IMR-90 (cell line): ENCODE measurements at regions of chr12 and their contacts with region 1.

Region 1: GRCh38 chr12:53451661-53452158 is at the start of gene PCBP2:
- DNase-seq: peak; percentile 100
- ATAC-seq: peak; percentile 91
- H3K4me3 ChIP-seq: peak within 1 kb of the TSS; percentile 98
- H3K27ac ChIP-seq: peak within 1 kb of the TSS; percentile 92
- H3K4me1 ChIP-seq: peaks cover 5% of the 10 kb centered on the region
- H3K27me3 ChIP-seq: no peaks in the 10 kb centered on the region
- CTCF ChIP-seq: peak; percentile 95
- POLR2A ChIP-seq: peak; percentile 93
- RAD21 ChIP-seq: peak; percentile 42
- total RNA-seq, gene PCBP2: 190 and 198 TPM in 2 replicates

Region 2: GRCh38 chr12:52969828-52970569 is 481.7 kb before region 1 on chr12:
- CTCF ChIA-PET with region 1: no interaction called
- POLR2A ChIA-PET with region 1: no interaction called
- dilution Hi-C with region 1: no loop called
- in situ Hi-C with region 1: no loop called
- intact Hi-C with region 1: no loop called
- DNase-seq: no peak
- ATAC-seq: no peak
- H3K4me3 ChIP-seq: no peak overlapping the region
- H3K27ac ChIP-seq: no peak overlapping the region
- H3K4me1 ChIP-seq: peaks cover 10% of the 10 kb centered on the region
- H3K27me3 ChIP-seq: no peaks in the 10 kb centered on the region; the same call in 1 of the 2 replicates
- CTCF ChIP-seq: no peak
- POLR2A ChIP-seq: no peak
- RAD21 ChIP-seq: no peak

Region 3: DNA sequence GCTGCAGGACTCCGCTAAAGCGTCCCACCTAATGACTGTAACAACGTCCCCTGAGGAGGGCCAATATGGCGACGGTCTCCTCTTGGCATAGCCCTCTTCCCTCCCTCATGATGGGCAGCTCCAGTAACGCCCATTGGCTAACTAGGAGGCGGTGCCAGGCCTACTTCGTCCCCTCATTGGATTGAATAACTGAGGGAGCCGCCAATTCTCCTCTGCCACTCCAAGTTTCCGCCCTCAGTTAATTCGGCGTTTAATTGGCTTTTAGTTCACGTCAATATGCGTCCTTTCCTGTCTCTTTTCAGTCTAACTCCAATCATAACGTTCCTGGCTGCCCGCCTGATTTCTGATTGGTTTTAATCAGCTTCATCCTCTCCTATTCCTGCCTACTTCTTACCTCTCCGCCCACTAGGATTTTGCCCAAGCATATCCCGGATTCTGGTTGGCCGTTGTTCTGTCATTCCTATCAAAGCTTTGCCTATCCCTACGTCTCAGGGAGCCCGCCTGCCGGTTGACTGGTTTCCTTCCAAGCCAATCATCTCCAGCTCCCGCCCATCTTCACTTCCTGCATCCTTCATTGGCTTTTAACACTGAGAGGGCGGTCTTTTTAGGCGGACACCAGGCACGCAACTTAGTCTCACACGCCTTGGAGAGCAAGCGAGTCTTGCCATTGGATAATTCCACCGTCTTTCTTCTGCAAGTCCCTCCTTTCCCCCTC is 72.2 kb before region 1 on chr12:
- CTCF ChIA-PET with region 1: no interaction called
- POLR2A ChIA-PET with region 1: no interaction called
- dilution Hi-C with region 1: no loop called
- in situ Hi-C with region 1: no loop called
- intact Hi-C with region 1: loop called (anchors 2 kb)
- DNase-seq: peak; percentile 100
- ATAC-seq: peak; percentile 72
- H3K4me3 ChIP-seq: peak overlapping the region; percentile 44
- H3K27ac ChIP-seq: peak overlapping the region; percentile 96
- H3K4me1 ChIP-seq: peaks cover 16% of the 10 kb centered on the region
- H3K27me3 ChIP-seq: no peaks in the 10 kb centered on the region
- CTCF ChIP-seq: no peak
- POLR2A ChIP-seq: peak; percentile 83
- RAD21 ChIP-seq: no peak

Region 4: GRCh38 chr12:53431187-53431586 is 20.5 kb before region 1 on chr12:
- CTCF ChIA-PET with region 1: no interaction called
- POLR2A ChIA-PET with region 1: no interaction called
- dilution Hi-C with region 1: no loop called
- in situ Hi-C with region 1: no loop called
- intact Hi-C with region 1: no loop called
- DNase-seq: peak; percentile 49
- ATAC-seq: peak; percentile 22
- H3K4me3 ChIP-seq: no peak overlapping the region
- H3K27ac ChIP-seq: no peak overlapping the region
- H3K4me1 ChIP-seq: peaks cover 5% of the 10 kb centered on the region; the same call in 1 of the 2 replicates
- H3K27me3 ChIP-seq: no peaks in the 10 kb centered on the region
- CTCF ChIP-seq: no peak
- POLR2A ChIP-seq: no peak
- RAD21 ChIP-seq: no peak

Region 5: DNA sequence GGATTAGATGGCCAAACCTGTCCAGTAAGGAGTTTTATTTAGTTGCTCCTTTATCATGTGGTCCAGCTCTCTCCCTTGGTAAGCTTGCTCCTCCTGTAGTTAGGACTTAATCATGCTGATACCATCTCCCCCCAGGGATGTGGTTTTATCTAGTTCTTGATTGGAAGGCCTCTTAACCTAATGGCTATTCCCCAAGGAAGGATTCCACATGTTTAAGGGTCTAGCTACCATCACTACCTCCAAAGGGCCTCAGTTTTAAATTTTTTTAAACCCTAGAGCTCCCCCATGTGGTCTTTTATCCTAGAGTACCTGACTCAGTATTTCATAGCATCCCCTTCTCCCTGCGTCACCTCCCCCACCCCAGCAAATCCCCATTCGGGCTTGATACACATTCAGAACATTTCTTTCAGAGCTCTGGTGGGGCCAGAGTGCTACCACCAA is 25.1 kb after region 1 on chr12:
- CTCF ChIA-PET with region 1: no interaction called
- POLR2A ChIA-PET with region 1: interaction called, 13 read pairs
- dilution Hi-C with region 1: no loop called
- in situ Hi-C with region 1: no loop called
- intact Hi-C with region 1: no loop called
- DNase-seq: no peak
- ATAC-seq: no peak
- H3K4me3 ChIP-seq: no peak overlapping the region
- H3K27ac ChIP-seq: no peak overlapping the region
- H3K4me1 ChIP-seq: peaks cover 19% of the 10 kb centered on the region
- H3K27me3 ChIP-seq: no peaks in the 10 kb centered on the region
- CTCF ChIP-seq: peak; percentile 34
- POLR2A ChIP-seq: no peak
- RAD21 ChIP-seq: no peak

Region 6: DNA sequence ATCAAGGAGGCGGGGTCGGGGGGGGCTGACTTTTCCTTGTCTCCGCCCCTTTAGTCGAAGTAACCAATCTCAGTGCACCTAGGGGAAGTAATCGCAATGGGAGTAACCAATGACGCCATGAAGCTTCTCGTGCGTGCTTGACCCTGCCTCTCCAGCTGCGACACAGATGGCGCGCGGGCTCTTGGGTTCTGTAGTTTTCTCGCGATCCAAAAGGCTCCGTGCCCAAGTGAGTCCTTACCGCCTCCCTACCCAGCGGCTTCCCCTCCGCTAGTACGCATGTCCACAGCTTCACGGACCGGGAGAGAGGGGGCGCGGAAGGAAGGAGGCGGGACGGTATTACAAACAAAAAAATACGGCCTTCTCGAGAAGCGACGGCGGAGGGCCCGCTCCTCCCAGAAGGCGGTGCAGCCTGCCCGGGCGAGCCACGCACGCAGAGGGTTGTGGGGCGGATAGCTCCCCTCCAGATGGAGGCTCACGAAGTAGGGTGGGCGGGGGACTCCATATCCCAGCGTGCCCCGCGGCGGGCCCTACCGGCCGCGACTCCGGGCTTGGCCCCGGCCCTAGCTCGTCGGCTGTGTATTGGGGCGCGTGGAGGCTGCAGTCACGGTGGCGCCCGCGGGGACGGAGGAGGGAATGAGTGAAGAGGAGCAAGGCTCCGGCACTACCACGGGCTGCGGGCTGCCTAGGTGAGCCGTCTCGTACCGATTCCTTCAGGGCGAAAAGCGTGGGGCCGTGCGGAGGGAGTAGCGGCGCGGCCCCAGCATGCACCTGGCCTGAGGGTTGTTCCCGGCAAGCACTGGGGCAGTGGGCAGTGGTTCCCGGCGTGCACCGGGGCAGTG is 49.3 kb after region 1 on chr12 and contains the start of gene TARBP2:
- CTCF ChIA-PET with region 1: no interaction called
- POLR2A ChIA-PET with region 1: no interaction called
- dilution Hi-C with region 1: no loop called
- in situ Hi-C with region 1: no loop called
- intact Hi-C with region 1: loop called (anchors 5 kb)
- DNase-seq: peak; percentile 100
- ATAC-seq: peak; percentile 71
- H3K4me3 ChIP-seq: peak within 1 kb of the TSS; percentile 76
- H3K27ac ChIP-seq: peak within 1 kb of the TSS; percentile 96
- H3K4me1 ChIP-seq: peaks cover 14% of the 10 kb centered on the region
- H3K27me3 ChIP-seq: no peaks in the 10 kb centered on the region
- CTCF ChIP-seq: 0 out of 2 replicates have a peak, but pooled peaks have one; percentile 9
- POLR2A ChIP-seq: peak; percentile 76
- RAD21 ChIP-seq: no peak
- total RNA-seq, gene TARBP2: 27.4 and 27.8 TPM in 2 replicates

Region 7: GRCh38 chr12:53770281-53770680 is 318.6 kb after region 1 on chr12:
- CTCF ChIA-PET with region 1: no interaction called
- POLR2A ChIA-PET with region 1: no interaction called
- dilution Hi-C with region 1: no loop called
- in situ Hi-C with region 1: no loop called
- intact Hi-C with region 1: no loop called
- DNase-seq: peak; percentile 97
- ATAC-seq: peak; percentile 84
- H3K4me3 ChIP-seq: no peak overlapping the region
- H3K27ac ChIP-seq: no peak overlapping the region
- H3K4me1 ChIP-seq: peaks cover 13% of the 10 kb centered on the region
- H3K27me3 ChIP-seq: no peaks in the 10 kb centered on the region
- CTCF ChIP-seq: no peak
- POLR2A ChIP-seq: no peak
- RAD21 ChIP-seq: no peak